Aorta (tissue), 5 donors: ENCODE measurements at regions of chr2 and their contacts with region 1.

Region 1: GRCh38 chr2:235595422-235596010 is 101.7 kb downstream of the AGAP1 start:
- DNase-seq: peak; percentile 67 to 86
- ATAC-seq: peak; percentile 80
- H3K4me3 ChIP-seq: no peak overlapping the region
- H3K27ac ChIP-seq: no peak overlapping the region
- H3K4me1 ChIP-seq: no peaks in the 10 kb centered on the region
- H3K27me3 ChIP-seq: no peaks in the 10 kb centered on the region

Region 2: DNA sequence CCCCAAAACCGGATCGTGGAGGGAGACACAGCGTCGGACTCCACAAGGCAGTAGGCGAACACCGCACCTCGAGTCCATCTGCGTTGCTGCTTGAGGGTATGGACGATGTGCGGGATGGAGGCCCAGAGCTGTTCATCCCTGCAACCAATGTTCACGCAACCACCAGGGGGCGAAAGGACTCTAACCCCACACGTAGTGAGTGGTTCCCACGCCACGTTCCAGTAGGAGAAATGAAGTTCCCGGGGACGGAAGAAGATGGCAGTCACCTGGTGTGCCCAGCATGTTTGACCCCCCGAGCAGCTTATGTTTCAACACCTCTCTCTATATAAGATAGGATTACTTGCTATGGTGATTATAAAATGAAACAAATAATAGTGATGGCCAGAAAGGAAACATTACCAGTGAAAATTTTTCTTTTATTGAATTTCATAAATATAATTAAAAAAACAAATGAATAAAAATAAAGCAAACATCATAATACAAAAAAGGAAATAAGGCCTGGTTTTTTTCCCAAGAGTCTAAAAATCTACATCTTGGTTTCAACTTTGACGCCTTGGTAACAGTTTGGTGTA is 459.4 kb before region 1 on chr2:
- intact Hi-C with region 1: loop called (anchors 2 to 5 kb)
- DNase-seq: peak; percentile 82 to 89
- ATAC-seq: no peak
- H3K4me3 ChIP-seq: no peak overlapping the region
- H3K27ac ChIP-seq: no peak overlapping the region
- H3K4me1 ChIP-seq: no peaks in the 10 kb centered on the region
- H3K27me3 ChIP-seq: no peaks in the 10 kb centered on the region

Region 3: DNA sequence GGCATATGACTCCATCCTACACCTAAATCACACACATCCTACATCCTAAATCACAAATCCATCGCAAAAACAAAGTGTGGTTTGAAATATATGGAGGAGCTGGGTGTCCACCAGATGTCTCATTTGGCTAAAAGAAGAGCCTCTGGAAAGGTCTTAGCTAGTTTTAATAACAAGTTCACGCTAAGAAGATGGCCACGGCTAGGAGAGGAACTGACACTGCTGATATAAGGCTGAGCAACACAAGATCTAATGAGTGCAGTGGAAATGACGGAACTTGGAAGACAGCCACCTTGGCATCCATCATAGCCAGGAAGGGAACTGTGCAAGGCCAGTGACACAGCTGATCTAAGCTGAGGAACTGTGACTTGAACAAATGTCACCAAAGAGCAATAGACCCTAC is 161.7 kb before region 1 on chr2:
- intact Hi-C with region 1: loop called in 1 of 2 experiments (anchors 10 kb)
- DNase-seq: peak in 1 of 2 donors; percentile 83
- ATAC-seq: peak; percentile 81
- H3K4me3 ChIP-seq: no peak overlapping the region
- H3K27ac ChIP-seq: no peak overlapping the region
- H3K4me1 ChIP-seq: no peaks in the 10 kb centered on the region
- H3K27me3 ChIP-seq: no peaks in the 10 kb centered on the region

Region 4: GRCh38 chr2:235614900-235615712 is 19.6 kb after region 1 on chr2:
- intact Hi-C with region 1: no loop called
- DNase-seq: peak; percentile 14 to 69
- ATAC-seq: peak; percentile 90
- H3K4me3 ChIP-seq: no peak overlapping the region
- H3K27ac ChIP-seq: no peak overlapping the region
- H3K4me1 ChIP-seq: no peaks in the 10 kb centered on the region
- H3K27me3 ChIP-seq: no peaks in the 10 kb centered on the region

Region 5: GRCh38 chr2:235669269-235669831 is 73.8 kb after region 1 on chr2:
- intact Hi-C with region 1: loop called in 1 of 2 experiments (anchors 5 kb)
- DNase-seq: peak; percentile 69 to 89
- ATAC-seq: peak; percentile 73
- H3K4me3 ChIP-seq: peak overlapping the region; percentile 61 to 98
- H3K27ac ChIP-seq: no peak overlapping the region
- H3K4me1 ChIP-seq: no peaks in the 10 kb centered on the region
- H3K27me3 ChIP-seq: no peaks in the 10 kb centered on the region

Region 6: GRCh38 chr2:235746257-235747084 is 151.0 kb after region 1 on chr2:
- intact Hi-C with region 1: loop called (anchors 2 to 5 kb)
- DNase-seq: no peak
- ATAC-seq: peak; percentile 87
- H3K4me3 ChIP-seq: no peak overlapping the region
- H3K27ac ChIP-seq: no peak overlapping the region
- H3K4me1 ChIP-seq: no peaks in the 10 kb centered on the region
- H3K27me3 ChIP-seq: no peaks in the 10 kb centered on the region

Region 7: DNA sequence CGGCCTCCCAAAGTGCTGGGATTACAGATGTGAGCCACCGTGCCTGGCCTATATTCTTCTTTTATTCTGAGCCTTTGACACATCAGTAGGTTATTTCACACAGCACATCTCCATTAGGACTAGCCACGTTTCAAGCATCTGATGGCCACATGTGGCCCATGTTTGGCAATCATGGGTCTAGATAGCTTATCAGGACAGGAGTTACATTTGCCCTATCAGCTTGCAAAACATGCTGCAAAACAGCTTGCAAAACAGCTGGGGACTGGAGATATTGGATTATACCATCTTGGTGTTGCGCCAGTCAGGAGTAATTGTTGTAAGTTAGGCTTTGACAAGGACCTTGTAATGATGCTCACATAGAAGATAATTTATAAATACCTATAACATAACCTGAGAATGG is 477.7 kb after region 1 on chr2:
- intact Hi-C with region 1: no loop called
- DNase-seq: no peak
- ATAC-seq: no peak
- H3K4me3 ChIP-seq: no peak overlapping the region
- H3K27ac ChIP-seq: no peak overlapping the region
- H3K4me1 ChIP-seq: no peaks in the 10 kb centered on the region
- H3K27me3 ChIP-seq: no peaks in the 10 kb centered on the region